ENCODE measurements at regions of chr13 and their contacts with region 1.

Region 1: DNA sequence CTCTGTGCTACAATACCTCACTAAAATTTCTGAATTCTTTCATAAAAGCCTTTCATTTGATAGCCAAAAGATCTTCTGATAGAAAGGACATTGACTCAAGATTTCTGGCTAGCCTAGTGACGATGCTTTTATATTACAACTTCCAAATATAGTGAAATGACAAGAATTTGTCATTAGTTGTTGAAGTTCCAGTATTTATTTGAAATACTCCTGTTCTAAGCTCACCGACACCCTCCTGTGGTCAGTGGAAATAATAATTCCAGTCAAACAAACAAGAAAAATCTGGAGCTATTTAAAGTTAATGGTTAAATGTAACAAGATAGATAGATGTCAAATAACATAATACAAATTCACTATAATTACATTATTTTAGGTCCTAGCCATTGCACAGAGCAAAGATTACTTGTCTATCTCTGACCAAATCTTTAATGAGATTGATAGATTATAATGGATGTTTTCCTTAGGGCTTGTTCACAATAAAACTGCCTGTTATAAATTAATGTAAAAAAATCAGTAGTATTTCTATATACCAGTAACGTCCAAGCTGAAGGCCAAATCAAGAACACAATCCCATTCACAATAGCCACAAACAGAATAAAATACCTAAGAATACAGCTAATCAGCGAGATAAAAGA is 195.5 kb downstream of the RGCC start:
- DNase-seq: peak; percentile 41
- H3K4me3 ChIP-seq: no peak overlapping the region
- H3K27me3 ChIP-seq: no peaks in the 10 kb centered on the region
- CTCF ChIP-seq: peak; percentile 50

Region 2: GRCh38 chr13:41384755-41385503 is 267.9 kb before region 1 on chr13:
- CTCF ChIA-PET with region 1: interaction called, 15 read pairs
- POLR2A ChIA-PET with region 1: no interaction called
- DNase-seq: no peak
- H3K4me3 ChIP-seq: no peak overlapping the region
- H3K27me3 ChIP-seq: peaks cover 2% of the 10 kb centered on the region; the same call in 1 of the 2 replicates
- CTCF ChIP-seq: peak; percentile 48

Region 3: GRCh38 chr13:41411522-41411921 is 241.3 kb before region 1 on chr13:
- CTCF ChIA-PET with region 1: interaction called, 85 read pairs
- POLR2A ChIA-PET with region 1: no interaction called
- DNase-seq: peak; percentile 19
- H3K4me3 ChIP-seq: no peak overlapping the region
- H3K27me3 ChIP-seq: no peaks in the 10 kb centered on the region
- CTCF ChIP-seq: peak; percentile 49

Region 4: DNA sequence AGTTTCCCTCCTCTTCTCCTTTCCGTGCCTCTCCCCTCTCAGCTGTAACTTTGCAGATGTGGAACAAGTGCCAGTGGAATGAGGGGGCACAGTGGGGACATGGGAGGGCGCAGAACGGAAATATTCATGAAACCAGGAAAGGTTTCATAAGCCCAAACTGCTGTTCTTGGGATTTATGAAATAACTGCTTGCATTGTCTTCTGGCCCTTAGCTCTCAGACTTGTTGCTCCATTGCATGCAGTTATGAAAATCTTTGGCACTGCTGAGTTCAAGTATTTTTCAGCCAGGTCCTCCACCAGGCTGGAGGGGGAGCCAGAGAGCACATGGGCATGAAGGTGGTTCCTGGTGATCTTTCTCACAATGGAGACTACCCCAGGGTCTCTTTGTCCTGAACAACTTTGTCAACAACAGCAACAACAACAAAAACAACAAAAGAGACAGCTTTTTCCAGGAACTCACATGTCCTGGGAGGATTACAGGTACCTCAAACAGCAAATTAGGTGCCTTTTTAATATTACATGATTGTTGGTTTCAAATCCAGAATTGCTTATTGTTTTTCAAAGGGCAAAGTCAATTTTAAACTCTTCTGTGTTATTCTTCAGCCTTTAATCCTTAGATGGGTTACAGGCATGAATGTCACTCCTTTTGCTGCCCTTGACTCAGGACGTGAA is 193.9 kb before region 1 on chr13:
- CTCF ChIA-PET with region 1: interaction called, 21 read pairs
- POLR2A ChIA-PET with region 1: no interaction called
- DNase-seq: no peak
- H3K4me3 ChIP-seq: peak overlapping the region; percentile 57
- H3K27me3 ChIP-seq: peaks cover 7% of the 10 kb centered on the region
- CTCF ChIP-seq: peak; percentile 86

Region 5: GRCh38 chr13:41613984-41614661 is 38.7 kb before region 1 on chr13:
- CTCF ChIA-PET with region 1: interaction called, 14 read pairs
- POLR2A ChIA-PET with region 1: no interaction called
- DNase-seq: peak; percentile 83
- H3K4me3 ChIP-seq: no peak overlapping the region
- H3K27me3 ChIP-seq: no peaks in the 10 kb centered on the region
- CTCF ChIP-seq: no peak

Region 6: GRCh38 chr13:42110410-42111155 is 457.7 kb after region 1 on chr13:
- CTCF ChIA-PET with region 1: interaction called, 14 read pairs
- POLR2A ChIA-PET with region 1: no interaction called
- DNase-seq: peak; percentile 27
- H3K4me3 ChIP-seq: no peak overlapping the region
- H3K27me3 ChIP-seq: no peaks in the 10 kb centered on the region
- CTCF ChIP-seq: peak; percentile 56